Prostate gland (tissue), 2 donors: ENCODE measurements at regions of chr3 and their contacts with region 1.

Region 1: DNA sequence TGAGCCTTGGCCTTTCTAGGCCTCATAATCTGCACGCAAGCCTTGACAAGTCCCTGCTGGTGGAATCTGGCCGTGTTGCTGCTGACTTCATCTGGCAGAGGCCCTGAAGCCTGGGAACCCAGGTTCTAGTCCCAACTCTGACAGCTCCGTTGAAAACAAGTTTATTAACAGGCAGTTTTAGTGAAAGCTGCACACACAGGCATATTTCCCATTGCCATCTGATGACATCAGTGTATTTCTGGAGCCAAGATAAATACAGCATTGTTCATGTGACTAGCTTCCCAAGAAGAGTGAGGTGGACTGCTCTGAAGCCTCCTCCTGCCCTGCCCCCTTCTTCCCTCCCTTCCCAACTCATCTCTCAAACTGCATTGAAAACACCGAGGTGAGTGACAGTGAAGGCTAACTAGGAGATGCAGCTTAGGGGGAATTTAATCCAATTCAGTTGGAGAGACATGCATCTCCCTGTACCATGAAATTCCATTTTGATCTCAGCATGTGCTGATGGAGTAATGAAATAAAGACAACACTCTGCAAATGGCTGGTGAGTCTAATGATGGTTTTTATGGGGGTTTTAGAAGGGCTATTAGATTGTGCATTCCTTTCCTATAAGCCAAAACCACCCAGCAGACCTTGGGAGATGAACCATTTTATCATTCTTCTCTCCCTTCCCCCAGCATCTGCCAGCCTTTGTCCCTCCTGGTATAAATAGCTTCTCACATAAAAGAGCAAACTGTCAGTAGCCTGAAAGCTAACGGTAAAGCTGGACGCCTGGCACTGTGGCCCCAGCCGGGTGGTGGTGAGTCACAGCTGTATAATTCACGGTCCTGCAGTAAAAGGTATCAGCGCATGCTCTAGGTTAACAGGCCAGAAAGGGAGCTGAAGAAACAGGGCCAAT is 38.0 kb downstream of the PRICKLE2 start:
- DNase-seq: peak; percentile 63
- H3K4me3 ChIP-seq: no peak overlapping the region
- H3K27ac ChIP-seq: peak overlapping the region; percentile 33 to 57
- H3K4me1 ChIP-seq: no peaks in the 10 kb centered on the region
- H3K27me3 ChIP-seq: no peaks in the 10 kb centered on the region
- CTCF ChIP-seq: peak in 1 of 4 experiments; percentile 19
- POLR2A ChIP-seq: no peak

Region 2: GRCh38 chr3:63441262-63441661 is 746.0 kb before region 1 on chr3:
- intact Hi-C with region 1: no loop called
- DNase-seq: no peak
- H3K4me3 ChIP-seq: no peak overlapping the region
- H3K27ac ChIP-seq: no peak overlapping the region
- H3K4me1 ChIP-seq: no peaks in the 10 kb centered on the region
- H3K27me3 ChIP-seq: no peaks in the 10 kb centered on the region
- CTCF ChIP-seq: no peak
- POLR2A ChIP-seq: no peak

Region 3: GRCh38 chr3:63937661-63938651 is 249.4 kb before region 1 on chr3:
- intact Hi-C with region 1: no loop called
- DNase-seq: peak; percentile 60
- H3K4me3 ChIP-seq: no peak overlapping the region
- H3K27ac ChIP-seq: no peak overlapping the region
- H3K4me1 ChIP-seq: no peaks in the 10 kb centered on the region
- H3K27me3 ChIP-seq: no peaks in the 10 kb centered on the region
- CTCF ChIP-seq: no peak
- POLR2A ChIP-seq: no peak

Region 4: GRCh38 chr3:64166584-64167162 is 20.6 kb before region 1 on chr3:
- intact Hi-C with region 1: loop called (anchors 1 kb)
- DNase-seq: no peak
- H3K4me3 ChIP-seq: no peak overlapping the region
- H3K27ac ChIP-seq: peak overlapping the region; percentile 4 to 40
- H3K4me1 ChIP-seq: peaks cover 8% of the 10 kb centered on the region
- H3K27me3 ChIP-seq: no peaks in the 10 kb centered on the region
- CTCF ChIP-seq: peak in 1 of 4 experiments; percentile 45
- POLR2A ChIP-seq: no peak

Region 5: GRCh38 chr3:64276131-64276530 is 88.8 kb after region 1 on chr3:
- intact Hi-C with region 1: no loop called
- DNase-seq: no peak
- H3K4me3 ChIP-seq: no peak overlapping the region
- H3K27ac ChIP-seq: no peak overlapping the region
- H3K4me1 ChIP-seq: no peaks in the 10 kb centered on the region
- H3K27me3 ChIP-seq: no peaks in the 10 kb centered on the region
- CTCF ChIP-seq: no peak
- POLR2A ChIP-seq: no peak

Region 6: DNA sequence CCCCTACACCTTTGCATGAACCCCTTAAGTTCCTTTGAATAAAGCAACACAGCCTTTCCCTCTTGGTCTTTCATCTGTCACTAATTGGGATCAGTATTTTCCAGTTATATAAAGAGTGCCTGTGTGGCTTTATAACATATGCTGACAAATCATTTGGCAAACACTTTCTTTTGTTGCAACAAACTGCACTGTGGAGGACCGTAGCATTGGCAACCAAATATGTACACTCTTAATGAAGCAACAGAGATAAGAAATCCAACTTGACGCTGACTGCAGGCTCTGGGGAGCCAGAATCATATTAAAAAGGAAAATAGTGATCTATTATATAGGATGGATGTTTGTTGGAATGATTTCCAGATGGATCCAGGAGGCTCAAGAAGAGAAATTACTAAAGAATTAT is 158.1 kb after region 1 on chr3:
- intact Hi-C with region 1: loop called (anchors 10 kb)
- DNase-seq: no peak
- H3K4me3 ChIP-seq: no peak overlapping the region
- H3K27ac ChIP-seq: peak overlapping the region in 1 of 2 donors; percentile 38
- H3K4me1 ChIP-seq: no peaks in the 10 kb centered on the region
- H3K27me3 ChIP-seq: no peaks in the 10 kb centered on the region
- CTCF ChIP-seq: no peak
- POLR2A ChIP-seq: no peak